ENCODE measurements at regions of chr5 and their contacts with region 1.

Region 1: DNA sequence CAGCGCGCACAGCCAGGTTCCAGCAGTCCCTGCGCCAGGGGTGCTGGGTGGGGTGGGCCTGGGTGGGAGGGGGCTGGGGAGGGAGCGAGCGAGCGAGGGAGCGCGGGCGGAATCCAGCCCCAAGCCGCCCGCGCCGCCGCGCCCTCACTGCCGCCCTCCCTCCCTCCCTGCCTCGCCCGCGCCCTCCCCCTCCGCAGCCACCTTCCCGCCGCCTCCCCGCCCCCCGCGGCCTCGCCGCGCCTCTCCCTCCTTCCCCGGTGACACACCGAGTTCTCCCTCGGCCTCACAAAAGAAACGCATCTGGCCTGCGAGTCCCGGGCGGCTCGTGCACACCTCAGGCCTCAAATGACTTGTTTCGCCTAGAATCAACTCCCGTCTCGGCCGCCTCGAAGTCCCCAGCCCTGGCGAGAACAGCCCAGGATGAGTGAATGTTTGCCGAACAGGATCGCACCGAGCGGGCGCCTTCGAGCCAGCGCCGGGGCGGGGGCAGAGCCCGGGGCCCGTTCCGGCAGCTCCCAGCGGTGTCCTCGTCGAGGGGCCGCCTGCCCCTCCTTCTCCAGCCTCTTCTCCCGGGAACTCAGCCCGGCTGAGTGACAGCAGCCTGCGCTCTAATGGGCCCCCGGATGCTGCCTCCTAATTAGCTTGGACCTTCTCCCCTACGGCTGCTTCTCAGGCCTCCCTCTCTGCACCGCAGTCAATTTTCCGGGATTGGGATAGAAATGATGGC is 371 bp upstream of the PITX1 start:
- DNase-seq: peak; percentile 66
- H3K4me3 Mint-ChIP-seq: peak overlapping the region; percentile 77
- H3K27ac Mint-ChIP-seq: no peak overlapping the region
- H3K4me1 Mint-ChIP-seq: peaks cover 35% of the 10 kb centered on the region
- H3K27me3 Mint-ChIP-seq: peaks cover 76% of the 10 kb centered on the region

Region 2: DNA sequence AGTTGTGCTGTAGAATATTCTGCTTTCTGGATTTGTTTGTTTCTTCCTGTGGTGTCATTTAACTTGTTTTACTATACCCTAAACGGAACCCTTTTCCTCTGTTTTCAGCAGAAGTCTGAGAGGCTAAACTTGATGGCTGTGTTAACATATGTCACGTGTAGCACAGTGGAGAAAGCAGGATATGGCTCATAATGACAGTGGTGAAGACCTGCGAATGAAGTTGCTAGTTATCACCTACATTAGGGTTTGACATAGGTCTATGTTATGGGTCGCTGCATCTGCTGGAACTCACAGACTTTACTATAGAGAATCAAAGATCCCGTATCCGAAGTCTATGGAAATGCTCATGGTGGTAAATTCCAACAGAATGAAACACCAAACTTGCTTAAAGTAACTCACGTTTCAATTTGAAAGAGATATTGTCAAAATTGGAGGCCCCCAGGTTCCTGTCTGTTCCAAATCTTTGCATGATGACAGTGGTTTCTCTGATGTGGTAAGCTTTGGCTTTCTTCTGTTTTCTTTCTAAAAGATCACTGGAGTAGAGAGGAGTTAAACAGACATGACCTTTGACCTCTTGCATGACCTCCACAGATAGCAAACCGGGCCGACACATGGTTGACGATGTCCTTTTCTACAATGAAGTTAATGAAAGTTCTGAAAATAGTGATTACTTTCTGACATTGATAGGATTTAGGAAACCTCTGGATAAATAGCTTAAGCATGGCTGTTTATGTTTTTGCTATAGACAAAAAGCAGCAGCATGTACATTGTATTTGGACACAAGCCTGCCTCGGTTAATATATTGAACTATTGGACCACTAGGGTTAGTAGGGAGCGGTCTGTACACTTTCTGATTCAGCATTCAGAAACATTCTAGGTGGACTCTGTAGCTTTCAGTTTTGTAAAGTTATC is 69.8 kb before region 1 on chr5:
- CTCF ChIA-PET with region 1: no interaction called
- intact Hi-C with region 1: loop called (anchors 5 kb)
- DNase-seq: peak; percentile 39
- H3K4me3 Mint-ChIP-seq: no peak overlapping the region
- H3K27ac Mint-ChIP-seq: peak overlapping the region; percentile 62
- H3K4me1 Mint-ChIP-seq: peaks cover 27% of the 10 kb centered on the region
- H3K27me3 Mint-ChIP-seq: no peaks in the 10 kb centered on the region

Region 3: DNA sequence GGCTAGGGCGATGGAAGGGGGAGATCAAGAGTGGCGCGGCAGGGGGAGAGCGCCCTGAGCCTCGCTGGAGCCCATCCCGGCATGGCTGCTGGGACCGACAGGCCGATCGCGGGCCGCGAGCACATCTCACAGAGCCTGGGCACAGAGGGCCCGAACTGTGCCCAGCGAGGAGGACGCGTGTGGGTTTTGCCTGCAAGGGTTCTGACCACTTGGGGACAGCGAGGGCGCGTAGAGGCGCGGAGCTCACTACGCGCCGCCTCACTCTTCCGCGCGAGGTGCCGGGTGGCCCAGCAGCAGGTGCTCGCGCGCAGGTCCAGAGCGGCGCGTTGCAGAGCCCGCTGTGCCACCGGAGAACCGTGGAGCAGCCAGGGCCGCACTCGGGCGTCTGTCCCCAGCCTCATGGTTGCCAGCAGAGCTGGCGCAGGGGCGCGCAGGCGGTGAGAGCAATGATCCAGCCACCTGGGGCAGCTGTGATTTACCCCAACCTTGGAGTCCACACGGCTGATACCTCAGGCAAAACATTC is 15.9 kb after region 1 on chr5:
- CTCF ChIA-PET with region 1: no interaction called
- intact Hi-C with region 1: no loop called
- DNase-seq: no peak
- H3K4me3 Mint-ChIP-seq: no peak overlapping the region
- H3K27ac Mint-ChIP-seq: no peak overlapping the region
- H3K4me1 Mint-ChIP-seq: peaks cover 2% of the 10 kb centered on the region
- H3K27me3 Mint-ChIP-seq: peaks cover 46% of the 10 kb centered on the region

Region 4: DNA sequence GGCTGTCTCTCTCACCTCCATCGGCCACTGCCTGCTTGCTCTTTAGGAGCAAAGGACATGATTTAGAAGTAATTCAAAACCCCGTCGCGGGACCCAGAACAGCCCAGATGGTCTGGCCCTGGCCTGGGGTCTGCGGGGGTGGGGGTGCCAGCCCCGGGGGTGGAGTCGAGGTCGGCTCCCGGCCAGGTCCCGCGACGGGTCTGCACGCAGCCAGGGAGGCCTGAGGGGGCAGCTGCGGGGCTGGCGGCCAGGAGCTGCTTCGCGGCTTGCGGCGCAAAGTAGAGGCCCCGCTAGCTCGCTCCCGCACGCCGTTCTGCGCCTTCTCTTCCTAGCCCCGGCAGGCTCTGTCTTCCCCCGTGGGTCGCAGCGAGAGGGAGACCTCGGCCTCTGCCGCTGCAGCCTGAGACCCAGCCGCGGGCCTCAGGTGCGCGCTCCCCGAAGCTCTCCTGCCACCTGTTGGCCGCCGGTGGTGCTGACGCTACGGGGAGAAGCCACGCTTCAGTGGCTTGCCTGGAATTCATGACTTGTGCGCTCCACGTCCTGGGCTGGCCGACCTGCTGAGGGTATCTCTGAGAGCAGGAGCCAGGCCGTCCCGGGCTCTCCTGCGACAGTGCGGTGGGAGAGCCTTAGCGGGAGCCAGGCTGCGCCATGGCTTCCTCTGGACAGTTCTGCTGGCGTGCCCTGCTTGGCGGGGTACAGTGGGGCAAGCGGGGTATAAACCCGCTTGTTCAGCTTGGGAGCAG is 156.9 kb after region 1 on chr5:
- CTCF ChIA-PET with region 1: no interaction called
- intact Hi-C with region 1: loop called (anchors 2 kb)
- DNase-seq: peak; percentile 84
- H3K4me3 Mint-ChIP-seq: peak overlapping the region; percentile 70
- H3K27ac Mint-ChIP-seq: no peak overlapping the region
- H3K4me1 Mint-ChIP-seq: peaks cover 2% of the 10 kb centered on the region
- H3K27me3 Mint-ChIP-seq: peaks cover 5% of the 10 kb centered on the region